ENCODE measurements at regions of chr7 and their contacts with region 1.

Region 1: GRCh38 chr7:123797673-123798527 is 47.1 kb upstream of the HYAL4 start:
- DNase-seq: no peak
- ATAC-seq: no peak
- H3K4me3 Mint-ChIP-seq: no peak overlapping the region
- H3K27ac Mint-ChIP-seq: no peak overlapping the region
- H3K4me1 Mint-ChIP-seq: no peaks in the 10 kb centered on the region
- H3K27me3 Mint-ChIP-seq: no peaks in the 10 kb centered on the region
- CTCF ChIP-seq: peak; percentile 87

Region 2: GRCh38 chr7:123757095-123757494 is 40.8 kb before region 1 on chr7:
- CTCF ChIA-PET with region 1: no interaction called
- POLR2A ChIA-PET with region 1: no interaction called
- intact Hi-C with region 1: no loop called
- DNase-seq: no peak
- ATAC-seq: no peak
- H3K4me3 Mint-ChIP-seq: no peak overlapping the region
- H3K27ac Mint-ChIP-seq: no peak overlapping the region
- H3K4me1 Mint-ChIP-seq: peaks cover 13% of the 10 kb centered on the region
- H3K27me3 Mint-ChIP-seq: peaks cover 2% of the 10 kb centered on the region
- CTCF ChIP-seq: no peak

Region 3: DNA sequence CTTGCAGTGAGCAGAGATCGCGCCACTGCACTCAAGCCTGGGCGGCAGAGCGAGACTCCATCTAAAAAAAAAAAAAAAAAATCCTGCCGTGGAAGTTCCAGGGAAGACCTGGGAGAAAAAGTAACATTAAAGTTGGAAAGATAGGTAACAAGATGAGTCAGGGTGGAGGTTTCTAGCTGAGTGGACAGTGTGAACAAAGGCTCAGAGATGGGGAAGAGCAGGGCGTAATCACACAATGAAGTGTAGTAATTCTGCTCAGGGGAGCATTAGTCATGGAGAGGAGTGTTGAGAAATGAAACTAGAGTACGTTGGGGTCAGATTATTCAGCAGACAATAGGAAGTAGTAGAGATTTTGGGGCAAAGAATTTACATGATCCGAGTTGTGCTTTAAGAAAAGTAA is 27.5 kb before region 1 on chr7:
- CTCF ChIA-PET with region 1: interaction called, 11 read pairs
- POLR2A ChIA-PET with region 1: no interaction called
- intact Hi-C with region 1: no loop called
- DNase-seq: peak; percentile 14
- ATAC-seq: peak; percentile 98
- H3K4me3 Mint-ChIP-seq: no peak overlapping the region
- H3K27ac Mint-ChIP-seq: no peak overlapping the region
- H3K4me1 Mint-ChIP-seq: peaks cover 7% of the 10 kb centered on the region
- H3K27me3 Mint-ChIP-seq: peaks cover 11% of the 10 kb centered on the region
- CTCF ChIP-seq: no peak

Region 4: DNA sequence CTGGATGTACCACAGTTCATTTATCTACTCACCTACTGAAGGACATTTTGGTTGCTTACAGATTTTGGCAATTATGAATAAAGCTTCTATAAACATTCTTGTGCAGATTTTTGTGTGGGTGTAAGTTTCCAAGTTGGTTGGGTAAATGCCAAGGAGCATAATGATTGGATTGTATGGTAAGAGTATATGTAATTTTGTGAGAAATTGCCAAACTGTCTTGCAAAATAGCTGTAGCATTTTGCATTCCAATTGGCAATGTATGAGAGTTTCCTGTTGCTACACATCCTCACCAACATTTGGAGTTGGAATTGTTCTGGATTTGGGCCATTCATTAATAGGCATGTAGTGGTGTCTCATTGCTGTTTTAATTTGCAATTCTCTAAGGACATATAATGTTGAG is 13.2 kb after region 1 on chr7:
- CTCF ChIA-PET with region 1: interaction called, 15 read pairs
- POLR2A ChIA-PET with region 1: no interaction called
- intact Hi-C with region 1: no loop called
- DNase-seq: no peak
- ATAC-seq: no peak
- H3K4me3 Mint-ChIP-seq: no peak overlapping the region
- H3K27ac Mint-ChIP-seq: no peak overlapping the region
- H3K4me1 Mint-ChIP-seq: no peaks in the 10 kb centered on the region
- H3K27me3 Mint-ChIP-seq: no peaks in the 10 kb centered on the region
- CTCF ChIP-seq: no peak

Region 5: GRCh38 chr7:123865517-123866117 is 67.7 kb after region 1 on chr7:
- CTCF ChIA-PET with region 1: interaction called, 118 read pairs
- POLR2A ChIA-PET with region 1: interaction called, 3 read pairs
- intact Hi-C with region 1: loop called (anchors 1 kb)
- DNase-seq: peak; percentile 65
- ATAC-seq: peak; percentile 96
- H3K4me3 Mint-ChIP-seq: no peak overlapping the region
- H3K27ac Mint-ChIP-seq: no peak overlapping the region
- H3K4me1 Mint-ChIP-seq: no peaks in the 10 kb centered on the region
- H3K27me3 Mint-ChIP-seq: peaks cover 13% of the 10 kb centered on the region
- CTCF ChIP-seq: peak; percentile 76

Region 6: GRCh38 chr7:124349443-124349842 is 551.5 kb after region 1 on chr7:
- CTCF ChIA-PET with region 1: no interaction called
- POLR2A ChIA-PET with region 1: no interaction called
- intact Hi-C with region 1: no loop called
- DNase-seq: no peak
- ATAC-seq: no peak
- H3K4me3 Mint-ChIP-seq: no peak overlapping the region
- H3K27ac Mint-ChIP-seq: no peak overlapping the region
- H3K4me1 Mint-ChIP-seq: no peaks in the 10 kb centered on the region
- H3K27me3 Mint-ChIP-seq: no peaks in the 10 kb centered on the region
- CTCF ChIP-seq: no peak

Measured in activated CD8-positive, alpha-beta T cell treated with anti-CD3 and anti-CD28 coated beads for 36 hours (primary cell).